Aorta (tissue), 5 donors: ENCODE measurements at regions of chr4 and their contacts with region 1.

Region 1: GRCh38 chr4:121800961-121801714 is at the start of gene EXOSC9:
- DNase-seq: peak; percentile 96 to 99
- ATAC-seq: peak; percentile 97
- H3K4me3 ChIP-seq: peak within 1 kb of the TSS; percentile 67 to 69
- H3K27ac ChIP-seq: peak within 1 kb of the TSS; percentile 85 to 96
- H3K4me1 ChIP-seq: no peaks in the 10 kb centered on the region
- H3K27me3 ChIP-seq: no peaks in the 10 kb centered on the region
- total RNA-seq, gene EXOSC9: 16.0 to 17.7 TPM

Region 2: GRCh38 chr4:121696581-121697461 is 104.3 kb before region 1 on chr4 and contains the start of gene ANXA5:
- intact Hi-C with region 1: loop called in 1 of 2 experiments (anchors 5 kb)
- DNase-seq: peak; percentile 93 to 96
- ATAC-seq: peak; percentile 97
- H3K4me3 ChIP-seq: peak within 1 kb of the TSS; percentile 69 to 96
- H3K27ac ChIP-seq: peak within 1 kb of the TSS; percentile 77 to 99
- H3K4me1 ChIP-seq: peaks cover 0 to 8% of the 10 kb centered on the region in 2 donors
- H3K27me3 ChIP-seq: no peaks in the 10 kb centered on the region
- total RNA-seq, gene ANXA5: 335 to 471 TPM

Region 3: GRCh38 chr4:121758925-121759568 is 42.1 kb before region 1 on chr4:
- intact Hi-C with region 1: no loop called
- DNase-seq: no peak
- ATAC-seq: no peak
- H3K4me3 ChIP-seq: no peak overlapping the region
- H3K27ac ChIP-seq: no peak overlapping the region
- H3K4me1 ChIP-seq: no peaks in the 10 kb centered on the region
- H3K27me3 ChIP-seq: no peaks in the 10 kb centered on the region